Activated CD4-positive, alpha-beta memory T cell treated with anti-CD3 and anti-CD28 coated beads for 36 hours (primary cell): ENCODE measurements at regions of chr13 and their contacts with region 1.

Region 1: DNA sequence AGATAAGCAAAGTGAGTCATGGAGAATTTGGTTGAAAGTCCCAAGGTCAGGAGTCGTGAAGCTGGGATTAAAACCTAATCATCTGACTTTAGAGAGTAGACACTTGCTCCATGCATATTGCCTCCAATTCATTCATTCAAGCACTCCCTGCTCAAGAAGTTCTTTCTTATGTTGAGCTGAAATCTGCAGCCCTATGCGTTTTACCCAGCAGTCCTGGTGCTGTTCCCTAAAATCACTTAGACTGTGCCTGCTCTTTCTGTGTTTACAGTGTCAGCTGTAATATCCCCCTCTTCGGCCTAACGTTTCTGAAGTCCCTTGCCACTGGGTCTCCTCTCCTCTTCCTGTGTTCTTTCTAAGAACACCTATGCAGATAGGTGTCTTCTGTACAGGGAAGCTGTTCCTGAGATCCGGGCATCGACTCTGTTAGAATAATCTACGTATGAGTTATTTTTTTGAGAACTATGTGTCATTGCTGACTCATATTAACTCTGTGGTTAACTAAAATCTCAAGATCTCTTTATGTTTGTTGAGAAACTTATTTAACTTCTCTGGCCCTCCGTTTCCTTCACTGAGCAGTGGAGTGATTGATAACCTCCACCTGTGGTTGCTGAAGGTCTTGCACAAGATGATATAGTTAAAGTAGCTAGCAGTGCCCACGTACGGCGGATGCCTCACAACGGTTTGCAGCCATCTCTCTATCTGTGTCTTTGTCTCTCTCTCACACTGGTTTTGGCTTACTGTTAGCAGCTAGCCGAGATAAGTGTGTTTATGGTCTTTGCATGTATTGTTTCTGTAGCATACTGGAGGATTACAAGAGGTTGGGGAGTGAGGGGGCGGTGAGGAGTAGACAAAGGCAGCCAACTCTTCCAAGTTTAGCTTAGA is 4.7 kb downstream of the ALOX5AP start:
- DNase-seq: peak; percentile 83
- H3K4me3 Mint-ChIP-seq: peak overlapping the region; percentile 69
- H3K27ac Mint-ChIP-seq: peak overlapping the region; percentile 87
- H3K4me1 Mint-ChIP-seq: peaks cover 76% of the 10 kb centered on the region
- H3K27me3 Mint-ChIP-seq: peaks cover 2% of the 10 kb centered on the region

Region 2: GRCh38 chr13:30142486-30143211 is 597.4 kb before region 1 on chr13:
- CTCF ChIA-PET with region 1: no interaction called
- POLR2A ChIA-PET with region 1: no interaction called
- intact Hi-C with region 1: loop called (anchors 5 kb)
- DNase-seq: peak; percentile 68
- H3K4me3 Mint-ChIP-seq: no peak overlapping the region
- H3K27ac Mint-ChIP-seq: peak overlapping the region; percentile 92
- H3K4me1 Mint-ChIP-seq: peaks cover 70% of the 10 kb centered on the region
- H3K27me3 Mint-ChIP-seq: no peaks in the 10 kb centered on the region

Region 3: DNA sequence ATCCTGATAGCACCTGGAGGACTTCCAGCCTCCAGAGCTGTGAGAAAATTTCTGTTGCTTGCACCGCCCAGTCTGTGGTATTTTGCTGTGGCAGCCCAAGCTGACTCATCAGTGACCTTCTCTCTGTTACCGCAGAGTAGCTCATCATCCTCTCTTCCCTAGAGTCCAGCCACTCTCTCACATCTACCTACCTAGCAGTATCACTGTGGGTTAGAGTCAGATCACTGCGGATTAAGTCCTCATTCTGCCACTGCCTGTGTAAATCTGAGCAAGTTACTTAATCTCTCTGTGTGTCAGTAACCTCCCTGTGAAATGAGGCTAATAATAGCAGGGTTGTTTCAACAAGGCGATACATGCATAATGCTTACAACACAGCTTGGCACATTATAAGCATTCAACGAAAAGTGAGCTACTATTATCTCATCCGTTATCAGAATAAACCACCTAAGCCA is 162.6 kb before region 1 on chr13:
- CTCF ChIA-PET with region 1: no interaction called
- POLR2A ChIA-PET with region 1: no interaction called
- intact Hi-C with region 1: loop called (anchors 2 kb)
- DNase-seq: peak; percentile 80
- H3K4me3 Mint-ChIP-seq: no peak overlapping the region
- H3K27ac Mint-ChIP-seq: peak overlapping the region; percentile 11
- H3K4me1 Mint-ChIP-seq: peaks cover 23% of the 10 kb centered on the region
- H3K27me3 Mint-ChIP-seq: peaks cover 1% of the 10 kb centered on the region

Region 4: DNA sequence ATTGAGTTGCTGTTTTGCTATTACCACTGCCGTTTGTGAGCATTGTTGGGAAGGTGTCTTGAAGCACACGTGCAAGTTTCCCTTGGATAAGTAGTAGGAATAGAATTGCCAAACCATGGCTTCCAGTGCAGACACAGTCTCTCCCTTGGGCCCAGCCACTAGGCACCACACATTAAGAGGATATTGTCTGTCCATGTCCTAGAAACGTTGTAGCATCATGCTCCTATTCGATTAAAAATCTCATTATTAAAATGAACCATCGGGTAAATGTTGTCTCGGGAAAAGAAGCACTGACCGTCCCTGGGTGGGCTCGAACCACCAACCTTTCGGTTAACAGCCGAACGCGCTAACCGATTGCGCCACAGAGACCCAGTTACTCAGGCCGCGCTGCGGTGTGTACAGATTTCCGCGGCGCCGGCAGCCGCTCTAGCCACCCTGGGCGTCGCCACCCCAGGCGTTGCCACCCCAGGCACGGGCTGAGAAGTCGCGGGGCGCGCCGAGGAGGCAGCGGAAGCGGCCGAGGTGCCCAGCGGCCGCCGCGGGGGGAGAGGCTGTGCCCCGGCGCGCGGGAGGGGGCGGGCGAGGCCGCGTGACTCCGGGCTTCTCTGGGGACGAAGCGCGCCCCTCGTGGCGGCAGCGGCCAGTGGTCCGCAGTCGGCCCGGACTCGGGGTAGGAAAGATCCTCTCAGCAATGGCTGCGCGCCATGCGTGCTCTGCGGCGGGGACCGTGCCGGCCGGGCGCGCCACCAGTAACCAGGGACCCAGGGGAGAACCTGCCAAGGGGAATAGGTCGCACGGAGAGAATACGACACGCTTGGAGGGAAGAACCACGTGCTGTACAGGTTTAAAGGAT is 66.1 kb before region 1 on chr13:
- CTCF ChIA-PET with region 1: no interaction called
- POLR2A ChIA-PET with region 1: no interaction called
- intact Hi-C with region 1: loop called (anchors 1 kb)
- DNase-seq: peak; percentile 92
- H3K4me3 Mint-ChIP-seq: peak overlapping the region; percentile 81
- H3K27ac Mint-ChIP-seq: peak overlapping the region; percentile 76
- H3K4me1 Mint-ChIP-seq: peaks cover 13% of the 10 kb centered on the region
- H3K27me3 Mint-ChIP-seq: peaks cover 2% of the 10 kb centered on the region

Region 5: DNA sequence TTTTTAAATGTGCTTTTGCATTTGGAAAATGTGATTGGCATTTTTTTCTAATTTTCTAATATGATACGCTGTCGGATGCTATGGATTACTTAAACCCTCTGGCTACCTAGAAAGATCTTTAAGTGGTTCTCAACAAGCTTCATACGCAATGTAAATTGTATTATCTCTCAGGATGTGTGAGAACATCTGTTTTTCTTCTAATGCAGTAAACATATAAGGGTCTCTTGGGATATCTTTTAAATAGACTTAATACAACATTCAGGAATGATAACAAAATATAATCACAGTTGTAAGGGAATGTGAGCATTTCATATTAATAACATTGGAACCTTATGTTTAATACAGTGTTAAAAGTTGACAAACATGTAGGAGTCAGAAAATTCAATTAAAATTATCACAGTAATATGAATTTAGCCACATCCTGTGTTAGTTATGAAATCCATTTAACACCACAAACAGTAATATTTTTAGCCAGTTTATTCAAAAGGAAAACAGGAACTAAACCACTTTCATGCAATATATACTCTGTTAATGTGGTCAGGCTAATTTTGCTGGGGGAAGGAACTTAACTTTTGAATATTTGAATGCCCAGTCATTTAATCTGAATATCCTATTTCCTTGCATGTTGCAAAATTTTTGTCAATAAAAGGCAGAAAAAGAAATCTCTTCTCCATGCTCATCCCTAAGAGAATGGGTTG is 19.7 kb before region 1 on chr13:
- CTCF ChIA-PET with region 1: no interaction called
- POLR2A ChIA-PET with region 1: no interaction called
- intact Hi-C with region 1: no loop called
- DNase-seq: no peak
- H3K4me3 Mint-ChIP-seq: no peak overlapping the region
- H3K27ac Mint-ChIP-seq: no peak overlapping the region
- H3K4me1 Mint-ChIP-seq: peaks cover 2% of the 10 kb centered on the region
- H3K27me3 Mint-ChIP-seq: peaks cover 2% of the 10 kb centered on the region

Region 6: GRCh38 chr13:30763786-30764413 is 23.9 kb after region 1 on chr13:
- CTCF ChIA-PET with region 1: no interaction called
- POLR2A ChIA-PET with region 1: interaction called, 3 read pairs
- intact Hi-C with region 1: loop called (anchors 1 kb)
- DNase-seq: no peak
- H3K4me3 Mint-ChIP-seq: no peak overlapping the region
- H3K27ac Mint-ChIP-seq: no peak overlapping the region
- H3K4me1 Mint-ChIP-seq: peaks cover 11% of the 10 kb centered on the region
- H3K27me3 Mint-ChIP-seq: no peaks in the 10 kb centered on the region

Region 7: DNA sequence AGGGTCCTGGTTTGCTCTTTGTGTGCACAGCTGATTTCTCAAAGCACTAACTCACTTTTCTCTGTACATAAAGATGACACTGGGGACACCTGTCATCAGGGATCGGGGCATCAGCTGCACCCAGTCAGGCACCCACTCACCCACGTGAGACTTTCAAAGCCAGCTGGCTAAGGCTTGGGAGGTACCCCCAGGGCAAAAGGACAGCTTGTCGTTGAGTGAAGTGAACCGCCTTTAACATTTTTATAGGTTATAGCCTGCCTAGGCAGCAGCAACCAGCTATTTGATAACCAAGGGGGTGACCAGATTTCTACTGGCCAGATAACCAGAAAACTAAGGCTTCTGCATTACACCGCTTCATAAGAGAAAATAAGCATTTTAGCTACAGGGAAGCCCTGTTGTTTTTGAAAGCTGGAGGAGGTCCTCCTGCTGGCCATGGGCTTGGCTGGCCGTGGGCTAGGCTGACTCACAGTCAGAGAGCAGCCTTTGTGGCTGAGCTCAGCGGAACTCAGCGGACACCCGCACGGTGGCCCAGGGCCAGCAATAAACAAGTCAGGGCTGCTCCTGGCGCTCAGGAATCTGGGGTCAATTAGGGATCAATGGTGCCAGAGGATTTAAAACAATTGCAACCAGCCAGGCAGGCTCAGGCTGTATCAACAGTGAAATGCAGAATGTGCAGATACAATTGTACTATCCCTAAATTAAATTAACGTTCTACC is 52.4 kb after region 1 on chr13:
- CTCF ChIA-PET with region 1: interaction called, 10 read pairs
- POLR2A ChIA-PET with region 1: interaction called, 7 read pairs
- intact Hi-C with region 1: loop called (anchors 1 kb)
- DNase-seq: no peak
- H3K4me3 Mint-ChIP-seq: no peak overlapping the region
- H3K27ac Mint-ChIP-seq: no peak overlapping the region
- H3K4me1 Mint-ChIP-seq: peaks cover 35% of the 10 kb centered on the region
- H3K27me3 Mint-ChIP-seq: no peaks in the 10 kb centered on the region

Region 8: DNA sequence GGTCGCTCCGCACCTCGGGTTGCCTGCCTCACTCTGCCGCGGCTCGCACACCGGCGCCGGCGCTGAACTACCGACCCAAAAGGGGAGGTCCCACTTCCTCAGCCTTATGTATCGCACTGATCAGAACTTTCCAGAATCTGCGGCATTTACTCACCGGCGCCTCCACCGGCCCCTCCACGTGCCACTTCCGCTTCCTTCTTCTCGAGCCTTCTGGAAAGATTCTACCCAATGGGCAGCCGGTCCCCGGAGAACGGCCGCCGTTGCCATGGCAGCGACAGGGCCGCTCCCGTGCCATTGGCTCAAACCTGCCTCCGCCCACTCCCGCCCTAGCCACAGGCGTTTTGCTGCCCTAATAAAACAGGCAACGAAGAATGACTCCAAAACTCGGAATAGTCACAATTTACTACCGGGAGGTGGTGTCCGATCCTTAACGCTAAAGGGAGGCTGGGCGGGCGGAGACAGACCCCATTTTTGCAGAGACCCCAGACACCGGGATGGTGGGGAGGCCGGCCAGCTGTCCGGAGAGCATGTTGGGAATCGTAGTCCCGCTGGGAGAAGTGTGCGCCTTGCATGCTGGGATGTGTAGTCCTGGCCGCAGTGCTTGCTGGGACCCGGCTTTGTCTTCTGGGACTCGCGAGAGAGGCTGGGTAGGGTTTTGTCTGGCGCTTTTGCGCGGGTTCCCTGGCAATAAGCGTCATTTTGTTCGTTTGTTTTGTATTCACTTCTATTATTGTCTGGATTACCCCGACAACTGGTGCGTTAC is 422.0 kb after region 1 on chr13 and contains the start of gene HSPH1:
- CTCF ChIA-PET with region 1: no interaction called
- POLR2A ChIA-PET with region 1: no interaction called
- intact Hi-C with region 1: loop called (anchors 1 kb)
- DNase-seq: peak; percentile 99
- H3K4me3 Mint-ChIP-seq: peak within 1 kb of the TSS; percentile 92
- H3K27ac Mint-ChIP-seq: peak within 1 kb of the TSS; percentile 99
- H3K4me1 Mint-ChIP-seq: peaks cover 35% of the 10 kb centered on the region
- H3K27me3 Mint-ChIP-seq: no peaks in the 10 kb centered on the region
- total RNA-seq, gene HSPH1: 214 to 221 TPM